Endothelial cell of umbilical vein (primary cell): ENCODE measurements at regions of chr11 and their contacts with region 1.

Region 1: DNA sequence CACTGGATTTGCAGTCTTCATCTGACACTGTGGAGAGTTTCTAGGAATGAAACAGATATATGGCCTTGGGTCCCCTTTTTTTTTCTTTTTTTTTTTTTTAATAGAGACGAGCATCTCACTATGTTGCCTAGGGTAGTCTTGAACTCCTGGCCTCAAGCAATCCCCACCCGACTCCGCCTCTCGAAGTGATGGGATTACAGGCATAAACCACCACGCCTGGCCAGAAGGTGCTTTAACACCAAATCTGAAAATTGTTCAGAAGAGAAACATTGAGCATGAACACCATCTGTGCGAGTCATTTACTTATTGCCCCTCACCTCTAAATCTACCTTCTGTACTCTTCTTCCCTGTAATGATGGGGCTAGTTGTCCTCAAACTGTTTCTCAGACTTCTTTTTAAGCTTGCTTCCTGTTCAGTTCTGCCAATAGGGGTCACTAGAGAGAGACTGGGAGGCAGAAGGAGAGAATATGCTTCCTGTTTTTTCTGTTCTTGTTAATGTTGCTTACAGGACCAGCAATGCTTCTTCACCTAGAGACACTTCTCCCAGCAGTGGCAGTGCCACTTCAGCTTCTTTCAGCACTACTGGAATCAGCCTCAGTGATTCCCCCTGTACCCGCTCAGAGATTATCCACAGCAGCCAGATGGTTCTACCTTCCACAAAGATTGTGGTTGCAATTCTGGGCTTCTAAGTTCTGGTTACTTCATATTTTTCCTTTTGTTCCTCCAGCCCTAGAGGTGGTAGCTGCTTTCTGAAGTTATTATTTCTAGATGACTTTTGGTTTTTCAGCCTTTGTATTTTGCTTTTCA is 20.8 kb upstream of the ZBED5 start:
- DNase-seq: peak; percentile 69
- H3K4me3 ChIP-seq: no peak overlapping the region
- H3K27ac ChIP-seq: no peak overlapping the region
- H3K4me1 ChIP-seq: no peaks in the 10 kb centered on the region
- H3K27me3 ChIP-seq: no peaks in the 10 kb centered on the region
- CTCF ChIP-seq: peak; percentile 68 to 77
- POLR2A ChIP-seq: no peak

Region 2: GRCh38 chr11:10568486-10568941 is 310.1 kb before region 1 on chr11 and contains the start of gene LYVE1:
- CTCF ChIA-PET with region 1: no interaction called
- POLR2A ChIA-PET with region 1: no interaction called
- dilution Hi-C with region 1: no loop called
- intact Hi-C with region 1: no loop called
- DNase-seq: peak; percentile 93
- H3K4me3 ChIP-seq: no peak within 1 kb of the TSS
- H3K27ac ChIP-seq: no peak within 1 kb of the TSS
- H3K4me1 ChIP-seq: peaks cover 13% of the 10 kb centered on the region
- H3K27me3 ChIP-seq: no peaks in the 10 kb centered on the region
- CTCF ChIP-seq: no peak
- POLR2A ChIP-seq: no peak
- total RNA-seq, gene LYVE1: 1.5 and 7.6 TPM in 2 replicates

Region 3: GRCh38 chr11:10857709-10858438 is 20.7 kb before region 1 on chr11 and contains the start of gene ZBED5:
- CTCF ChIA-PET with region 1: interaction called, 13 read pairs
- POLR2A ChIA-PET with region 1: no interaction called
- dilution Hi-C with region 1: no loop called
- intact Hi-C with region 1: loop called (anchors 2 kb)
- DNase-seq: peak; percentile 99
- H3K4me3 ChIP-seq: peak within 1 kb of the TSS; percentile 63 to 100 (median 94)
- H3K27ac ChIP-seq: peak within 1 kb of the TSS; percentile 80
- H3K4me1 ChIP-seq: peaks cover 8% of the 10 kb centered on the region
- H3K27me3 ChIP-seq: no peaks in the 10 kb centered on the region
- CTCF ChIP-seq: peak in 1 of 2 donors; percentile 4
- POLR2A ChIP-seq: peak; percentile 96
- total RNA-seq, gene ZBED5: 35.7 and 41.2 TPM in 2 replicates

Region 4: DNA sequence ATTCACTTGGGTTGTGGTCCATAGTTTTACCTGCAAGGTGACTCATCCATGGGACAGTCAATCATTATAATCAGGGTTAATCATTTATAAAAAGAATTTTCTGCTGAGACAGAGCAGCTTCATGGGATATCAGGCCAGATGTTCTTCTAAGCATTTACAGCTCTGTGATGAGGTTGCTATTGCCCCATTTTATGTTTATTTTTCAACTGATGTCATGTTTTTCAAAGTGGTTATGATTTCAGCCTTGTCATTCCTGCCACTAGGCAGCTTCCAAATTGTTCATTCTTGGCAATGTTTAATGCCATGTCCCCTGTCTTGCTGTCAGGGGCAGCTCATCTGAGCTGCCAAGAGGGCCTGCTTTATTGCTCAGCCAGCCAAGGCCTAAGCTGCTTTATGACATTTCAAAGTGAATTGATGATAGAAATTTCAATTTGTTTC is 15.1 kb after region 1 on chr11:
- CTCF ChIA-PET with region 1: interaction called, 22 read pairs
- POLR2A ChIA-PET with region 1: no interaction called
- dilution Hi-C with region 1: no loop called
- intact Hi-C with region 1: no loop called
- DNase-seq: no peak
- H3K4me3 ChIP-seq: no peak overlapping the region
- H3K27ac ChIP-seq: no peak overlapping the region
- H3K4me1 ChIP-seq: peaks cover 2% of the 10 kb centered on the region
- H3K27me3 ChIP-seq: no peaks in the 10 kb centered on the region
- CTCF ChIP-seq: no peak
- POLR2A ChIP-seq: no peak

Region 5: DNA sequence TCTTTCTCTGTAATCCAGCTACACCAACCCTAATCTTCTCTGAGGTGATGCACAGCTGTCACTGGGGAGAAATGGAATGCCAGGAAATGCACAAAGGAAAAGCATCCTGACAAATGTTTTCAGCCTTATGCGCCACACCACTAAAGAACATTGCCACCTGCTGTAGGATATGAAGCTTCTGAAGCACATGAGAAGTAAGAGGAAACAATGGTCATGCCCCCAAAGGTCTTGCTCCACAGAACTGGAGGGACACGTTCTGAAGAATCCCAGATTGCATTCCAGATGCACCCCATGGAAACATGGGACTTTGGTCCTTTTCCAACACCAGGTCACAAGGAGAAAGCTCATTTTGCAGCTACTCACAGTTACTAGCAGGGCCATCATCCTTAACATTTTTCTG is 27.9 kb after region 1 on chr11:
- CTCF ChIA-PET with region 1: interaction called, 19 read pairs
- POLR2A ChIA-PET with region 1: no interaction called
- dilution Hi-C with region 1: no loop called
- intact Hi-C with region 1: loop called (anchors 5 kb)
- DNase-seq: peak; percentile 21
- H3K4me3 ChIP-seq: no peak overlapping the region
- H3K27ac ChIP-seq: no peak overlapping the region
- H3K4me1 ChIP-seq: peaks cover 10% of the 10 kb centered on the region
- H3K27me3 ChIP-seq: no peaks in the 10 kb centered on the region
- CTCF ChIP-seq: no peak
- POLR2A ChIP-seq: no peak

Region 6: DNA sequence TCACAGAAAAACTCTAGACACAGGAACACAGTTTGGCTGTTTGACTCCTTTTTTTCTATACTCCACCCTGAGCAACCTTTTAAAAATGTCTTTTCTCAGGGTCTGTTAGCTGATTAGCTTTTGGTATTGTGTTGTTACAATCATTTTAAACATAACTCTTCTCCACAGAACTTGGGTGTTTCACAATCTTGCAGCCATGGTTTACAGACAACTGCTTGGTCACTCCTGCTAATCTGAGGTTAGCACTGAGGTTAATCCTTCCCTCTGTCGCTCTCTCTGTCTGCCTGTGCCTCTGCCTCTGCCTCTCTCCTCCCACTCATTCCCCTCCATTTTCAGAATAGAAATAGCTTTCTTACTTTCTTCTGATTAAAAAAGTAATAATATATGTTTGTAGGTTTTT is 41.6 kb after region 1 on chr11:
- CTCF ChIA-PET with region 1: interaction called, 11 read pairs
- POLR2A ChIA-PET with region 1: no interaction called
- dilution Hi-C with region 1: no loop called
- intact Hi-C with region 1: no loop called
- DNase-seq: no peak
- H3K4me3 ChIP-seq: no peak overlapping the region
- H3K27ac ChIP-seq: no peak overlapping the region
- H3K4me1 ChIP-seq: no peaks in the 10 kb centered on the region
- H3K27me3 ChIP-seq: peaks cover 2 to 5% of the 10 kb centered on the region in 2 experiments
- CTCF ChIP-seq: no peak
- POLR2A ChIP-seq: no peak

Region 7: GRCh38 chr11:11022125-11022730 is 143.6 kb after region 1 on chr11:
- CTCF ChIA-PET with region 1: interaction called, 10 read pairs
- POLR2A ChIA-PET with region 1: no interaction called
- dilution Hi-C with region 1: no loop called
- intact Hi-C with region 1: loop called (anchors 2 kb)
- DNase-seq: peak; percentile 29
- H3K4me3 ChIP-seq: no peak overlapping the region
- H3K27ac ChIP-seq: no peak overlapping the region
- H3K4me1 ChIP-seq: peaks cover 19% of the 10 kb centered on the region
- H3K27me3 ChIP-seq: peaks cover 0 to 9% of the 10 kb centered on the region in 2 experiments
- CTCF ChIP-seq: peak; percentile 16 to 26
- POLR2A ChIP-seq: no peak

Region 8: DNA sequence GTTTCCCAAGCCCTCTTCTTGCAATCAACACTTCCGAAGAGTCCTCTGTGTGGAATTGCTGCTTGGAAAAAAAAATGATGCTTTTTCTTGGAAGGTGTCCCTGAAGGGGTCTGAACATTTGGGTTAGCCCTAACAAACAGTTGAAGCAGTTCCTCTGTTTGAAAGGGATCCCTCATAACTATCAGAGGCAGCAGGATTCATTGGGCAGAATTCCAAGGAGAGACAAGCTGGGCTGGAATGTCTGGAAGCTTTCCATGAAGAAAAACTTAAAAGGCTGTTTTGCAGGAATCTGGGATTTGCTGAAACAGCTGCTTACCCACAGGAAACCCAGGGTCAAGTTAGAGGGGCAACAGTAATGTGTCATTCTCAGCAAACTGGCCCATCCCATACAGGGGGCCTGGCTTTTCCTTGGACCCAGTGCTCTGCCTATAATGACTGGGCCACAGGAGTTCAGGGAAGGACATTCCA is 471.3 kb after region 1 on chr11:
- CTCF ChIA-PET with region 1: no interaction called
- POLR2A ChIA-PET with region 1: no interaction called
- dilution Hi-C with region 1: no loop called
- intact Hi-C with region 1: no loop called
- DNase-seq: peak; percentile 56
- H3K4me3 ChIP-seq: no peak overlapping the region
- H3K27ac ChIP-seq: no peak overlapping the region
- H3K4me1 ChIP-seq: peaks cover 7% of the 10 kb centered on the region
- H3K27me3 ChIP-seq: peaks cover 0 to 2% of the 10 kb centered on the region in 2 experiments
- CTCF ChIP-seq: no peak
- POLR2A ChIP-seq: no peak